ENCODE measurements at regions of chr12 and their contacts with region 1.

Region 1: GRCh38 chr12:22624870-22625761 is at the start of gene ETNK1:
- DNase-seq: peak; percentile 91
- ATAC-seq: peak; percentile 99
- H3K4me3 ChIP-seq: peak within 1 kb of the TSS; percentile 74
- H3K27ac ChIP-seq: peak within 1 kb of the TSS; percentile 90
- H3K4me1 ChIP-seq: peaks cover 3% of the 10 kb centered on the region; the same call in 1 of the 2 replicates
- H3K27me3 ChIP-seq: no peaks in the 10 kb centered on the region
- CTCF ChIP-seq: no peak
- POLR2A ChIP-seq: peak; percentile 95
- RAD21 ChIP-seq: no peak
- total RNA-seq, gene ETNK1: 33.3 and 35.3 TPM in 2 replicates

Region 2: GRCh38 chr12:22275846-22276245 is 349.3 kb before region 1 on chr12:
- CTCF ChIA-PET with region 1: no interaction called
- POLR2A ChIA-PET with region 1: no interaction called
- dilution Hi-C with region 1: no loop called
- in situ Hi-C with region 1: no loop called
- intact Hi-C with region 1: no loop called
- DNase-seq: peak; percentile 99
- ATAC-seq: peak; percentile 99
- H3K4me3 ChIP-seq: no peak overlapping the region
- H3K27ac ChIP-seq: peak overlapping the region; percentile 92
- H3K4me1 ChIP-seq: peaks cover 10% of the 10 kb centered on the region
- H3K27me3 ChIP-seq: no peaks in the 10 kb centered on the region
- CTCF ChIP-seq: no peak
- POLR2A ChIP-seq: no peak
- RAD21 ChIP-seq: peak; percentile 21; the same call in 1 of the 2 replicates

Region 3: DNA sequence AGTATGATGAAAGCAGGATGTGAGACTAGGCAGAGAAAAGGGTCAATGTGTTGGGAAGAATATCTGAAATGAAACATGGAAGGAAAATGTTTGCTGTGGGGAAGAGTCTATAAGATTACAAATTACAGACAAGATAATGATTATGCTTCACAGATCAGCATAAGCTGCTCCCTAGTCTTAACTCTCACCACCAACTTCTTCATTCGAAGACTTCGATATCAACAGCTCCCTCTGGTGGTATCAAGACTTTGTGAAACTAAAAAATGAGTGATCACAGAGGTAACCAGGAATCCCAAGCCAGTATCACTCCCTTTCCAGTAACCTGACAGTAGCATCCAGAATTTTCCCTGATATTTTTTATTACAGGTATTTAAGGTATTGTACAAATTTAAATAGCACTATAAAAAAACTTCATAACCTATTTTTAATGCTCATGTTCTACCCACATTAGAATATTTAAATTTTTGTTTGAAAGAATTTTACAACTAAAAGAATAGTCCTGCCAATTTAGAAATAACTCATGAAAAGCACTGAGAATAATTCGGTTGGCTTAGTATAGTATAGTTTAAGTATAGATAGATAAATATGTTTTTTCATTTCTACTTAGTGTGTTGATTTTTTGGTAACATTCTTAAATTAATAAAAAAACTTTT is 165.2 kb before region 1 on chr12:
- CTCF ChIA-PET with region 1: no interaction called
- POLR2A ChIA-PET with region 1: no interaction called
- dilution Hi-C with region 1: no loop called
- in situ Hi-C with region 1: loop called (anchors 10 kb)
- intact Hi-C with region 1: loop called (anchors 5 kb)
- DNase-seq: peak; percentile 54
- ATAC-seq: peak; percentile 79
- H3K4me3 ChIP-seq: no peak overlapping the region
- H3K27ac ChIP-seq: no peak overlapping the region
- H3K4me1 ChIP-seq: no peaks in the 10 kb centered on the region
- H3K27me3 ChIP-seq: no peaks in the 10 kb centered on the region
- CTCF ChIP-seq: peak; percentile 60
- POLR2A ChIP-seq: no peak
- RAD21 ChIP-seq: peak; percentile 38

Region 4: DNA sequence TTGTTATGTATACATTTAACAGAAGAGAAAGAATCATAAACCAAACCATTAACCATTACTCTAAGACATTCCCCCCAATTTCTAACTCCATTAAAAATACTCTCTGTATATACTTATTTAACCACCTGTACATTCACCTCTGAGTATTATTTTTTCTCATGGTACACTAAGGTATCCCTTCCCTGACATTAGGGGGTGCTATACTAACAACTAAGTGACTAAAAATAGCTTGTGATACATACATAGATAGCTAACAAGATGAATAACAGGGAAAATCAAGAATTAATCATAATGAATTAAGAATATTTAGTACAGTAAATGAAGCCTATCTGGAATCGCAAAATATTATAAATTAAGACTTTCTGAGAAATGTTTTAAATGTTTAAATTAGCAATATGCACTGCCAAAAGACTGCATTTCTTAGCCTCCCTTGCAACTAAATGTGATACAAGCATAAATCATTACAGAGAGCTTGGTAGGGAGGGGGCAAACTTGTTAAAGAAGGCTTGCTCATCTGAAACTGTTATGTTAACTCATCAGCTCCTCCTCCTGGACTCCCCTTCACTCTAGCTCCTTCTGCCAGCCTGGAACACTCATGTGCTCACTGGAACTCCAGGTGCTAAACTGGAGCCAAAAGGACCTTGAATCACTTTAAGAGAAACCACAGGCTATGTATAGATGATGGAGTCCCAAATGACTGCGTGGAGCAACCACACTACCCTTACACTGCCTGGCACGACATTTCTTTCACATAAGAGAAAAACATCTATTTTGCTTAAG is 95.6 kb before region 1 on chr12:
- CTCF ChIA-PET with region 1: no interaction called
- POLR2A ChIA-PET with region 1: no interaction called
- dilution Hi-C with region 1: no loop called
- in situ Hi-C with region 1: no loop called
- intact Hi-C with region 1: loop called (anchors 2 kb)
- DNase-seq: peak; percentile 63
- ATAC-seq: peak; percentile 40; the same call in 1 of the 2 replicates
- H3K4me3 ChIP-seq: no peak overlapping the region
- H3K27ac ChIP-seq: peak overlapping the region; percentile 69
- H3K4me1 ChIP-seq: peaks cover 7% of the 10 kb centered on the region
- H3K27me3 ChIP-seq: no peaks in the 10 kb centered on the region
- CTCF ChIP-seq: peak; percentile 44
- POLR2A ChIP-seq: no peak
- RAD21 ChIP-seq: no peak

Region 5: DNA sequence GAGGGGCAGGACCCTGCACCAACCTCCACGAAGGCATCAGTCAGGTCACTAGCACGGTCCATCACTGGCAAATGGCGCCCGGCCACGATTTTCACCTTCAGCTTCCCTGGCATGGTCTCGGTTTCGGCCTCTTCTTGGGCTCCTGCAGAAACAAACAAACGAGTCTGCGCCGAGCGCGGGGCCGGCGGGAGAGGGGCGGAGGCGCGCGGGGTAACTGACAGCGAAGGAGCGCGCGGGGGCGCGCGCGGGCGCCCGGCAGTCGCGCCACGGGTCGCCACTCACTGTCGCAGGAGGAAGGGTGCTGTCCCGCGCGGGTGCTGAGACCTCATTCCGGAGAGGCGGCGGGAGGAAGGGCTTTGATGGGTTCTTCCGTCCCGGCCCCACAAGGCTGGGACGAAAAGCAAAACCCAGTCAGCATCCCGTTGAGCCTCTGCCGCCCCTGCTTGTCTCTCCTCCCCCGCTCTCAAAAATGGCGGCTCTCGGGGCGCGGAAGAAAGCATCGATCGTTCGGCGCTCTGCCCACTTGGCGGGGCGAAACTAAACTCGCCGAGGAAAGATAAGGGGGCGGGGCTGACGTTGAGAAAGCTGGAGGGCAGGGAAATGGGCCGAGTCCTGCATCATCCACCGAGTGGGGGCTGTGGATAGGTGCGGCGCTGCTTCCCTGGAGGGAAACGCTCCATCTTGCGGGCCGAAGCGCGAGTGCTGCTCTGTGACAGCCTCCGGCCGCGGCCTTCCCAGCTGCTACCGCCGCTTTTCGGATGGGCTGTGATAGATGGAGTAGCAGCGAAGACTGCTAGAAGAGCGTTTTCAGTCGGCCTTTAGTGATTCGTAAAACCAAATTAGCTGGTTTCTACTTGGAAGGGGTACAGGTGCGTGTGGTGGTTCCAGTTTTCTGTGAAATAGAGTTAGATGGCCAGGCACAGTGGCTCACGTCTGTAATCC is 80.8 kb before region 1 on chr12 and contains the start of gene C2CD5:
- CTCF ChIA-PET with region 1: no interaction called
- POLR2A ChIA-PET with region 1: no interaction called
- dilution Hi-C with region 1: no loop called
- in situ Hi-C with region 1: no loop called
- intact Hi-C with region 1: loop called (anchors 1 kb)
- DNase-seq: peak; percentile 97
- ATAC-seq: peak; percentile 96
- H3K4me3 ChIP-seq: peak within 1 kb of the TSS; percentile 80
- H3K27ac ChIP-seq: peak within 1 kb of the TSS; percentile 96
- H3K4me1 ChIP-seq: peaks cover 4% of the 10 kb centered on the region
- H3K27me3 ChIP-seq: no peaks in the 10 kb centered on the region
- CTCF ChIP-seq: peak; percentile 42
- POLR2A ChIP-seq: peak; percentile 89
- RAD21 ChIP-seq: peak; percentile 37
- total RNA-seq, gene C2CD5: 15.8 and 16.1 TPM in 2 replicates

Region 6: GRCh38 chr12:22700106-22700505 is 75.0 kb after region 1 on chr12:
- CTCF ChIA-PET with region 1: no interaction called
- POLR2A ChIA-PET with region 1: no interaction called
- dilution Hi-C with region 1: no loop called
- in situ Hi-C with region 1: no loop called
- intact Hi-C with region 1: no loop called
- DNase-seq: peak; percentile 29
- ATAC-seq: peak; percentile 40; the same call in 1 of the 2 replicates
- H3K4me3 ChIP-seq: no peak overlapping the region
- H3K27ac ChIP-seq: no peak overlapping the region
- H3K4me1 ChIP-seq: no peaks in the 10 kb centered on the region
- H3K27me3 ChIP-seq: no peaks in the 10 kb centered on the region
- CTCF ChIP-seq: no peak
- POLR2A ChIP-seq: no peak
- RAD21 ChIP-seq: no peak